ENCODE measurements at regions of chr1 and their contacts with region 1.

Region 1: DNA sequence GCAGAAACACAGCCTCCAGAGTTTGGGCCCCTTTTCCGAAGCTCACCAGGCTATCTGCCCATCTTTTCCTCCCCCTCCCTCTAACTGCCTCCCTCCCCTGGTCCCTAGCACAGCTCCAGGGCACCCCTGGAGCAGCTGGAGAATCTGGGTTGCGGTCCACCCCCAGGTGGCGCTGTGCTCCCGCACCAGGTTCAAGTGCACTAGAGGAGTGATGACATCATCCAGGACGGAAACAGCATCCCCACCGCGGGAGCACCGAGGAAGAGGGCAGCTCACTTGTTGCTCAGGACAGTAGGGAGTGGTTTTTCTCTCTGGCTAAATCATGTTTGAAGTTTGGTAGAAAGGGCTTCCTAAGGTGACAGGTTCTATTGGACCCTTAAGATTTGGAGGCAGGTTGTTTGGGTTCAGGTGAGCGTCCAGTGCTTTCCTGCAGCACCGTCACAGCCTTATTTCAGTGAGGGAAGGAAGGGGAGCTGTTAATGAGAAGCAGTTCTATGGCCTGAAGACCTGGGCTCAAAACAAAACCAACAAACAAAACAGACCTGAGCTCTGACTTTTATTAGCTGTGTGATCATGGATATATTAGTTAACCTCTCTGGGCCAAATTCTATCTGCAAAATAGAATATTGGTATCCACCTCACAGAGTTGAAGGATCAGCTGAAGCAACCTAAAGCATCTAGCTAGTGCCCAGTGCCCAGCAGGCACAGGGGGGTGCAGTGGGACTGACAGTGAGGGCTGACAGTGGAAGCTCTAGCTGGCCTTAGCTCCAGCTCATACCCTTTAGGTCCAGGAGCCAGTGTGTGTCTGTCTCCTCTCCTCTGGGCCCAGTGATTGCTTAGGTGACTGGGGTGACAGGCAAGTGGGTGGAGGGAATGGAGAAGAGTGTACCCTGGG is 7.5 kb downstream of the SHISA4 start:
- DNase-seq: peak; percentile 92
- ATAC-seq: peak; percentile 94
- H3K4me3 Mint-ChIP-seq: peak overlapping the region; percentile 48
- H3K27ac Mint-ChIP-seq: peak overlapping the region; percentile 82
- H3K4me1 Mint-ChIP-seq: peaks cover 30% of the 10 kb centered on the region
- H3K27me3 Mint-ChIP-seq: peaks cover 13% of the 10 kb centered on the region

Region 2: DNA sequence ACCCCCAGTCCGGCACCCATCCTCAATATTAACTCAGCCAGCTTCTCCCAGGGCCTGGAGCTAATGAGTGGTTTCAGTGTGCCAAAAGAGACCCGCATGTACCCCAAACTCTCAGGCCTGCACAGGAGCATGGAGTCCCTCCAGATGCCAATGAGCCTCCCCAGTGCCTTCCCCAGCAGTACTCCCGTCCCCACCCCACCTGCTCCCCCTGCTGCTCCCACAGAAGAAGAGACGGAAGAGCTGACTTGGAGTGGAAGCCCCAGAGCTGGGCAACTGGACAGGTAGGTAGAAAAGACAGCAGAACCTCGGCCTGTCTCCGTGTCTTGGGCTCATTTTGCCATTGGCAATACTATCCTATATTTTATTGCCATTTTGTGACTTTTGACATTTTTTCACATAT is 112.6 kb before region 1 on chr1:
- CTCF ChIA-PET with region 1: no interaction called
- POLR2A ChIA-PET with region 1: no interaction called
- DNase-seq: no peak
- ATAC-seq: no peak
- H3K4me3 Mint-ChIP-seq: no peak overlapping the region
- H3K27ac Mint-ChIP-seq: no peak overlapping the region
- H3K4me1 Mint-ChIP-seq: no peaks in the 10 kb centered on the region
- H3K27me3 Mint-ChIP-seq: peaks cover 3% of the 10 kb centered on the region

Region 3: DNA sequence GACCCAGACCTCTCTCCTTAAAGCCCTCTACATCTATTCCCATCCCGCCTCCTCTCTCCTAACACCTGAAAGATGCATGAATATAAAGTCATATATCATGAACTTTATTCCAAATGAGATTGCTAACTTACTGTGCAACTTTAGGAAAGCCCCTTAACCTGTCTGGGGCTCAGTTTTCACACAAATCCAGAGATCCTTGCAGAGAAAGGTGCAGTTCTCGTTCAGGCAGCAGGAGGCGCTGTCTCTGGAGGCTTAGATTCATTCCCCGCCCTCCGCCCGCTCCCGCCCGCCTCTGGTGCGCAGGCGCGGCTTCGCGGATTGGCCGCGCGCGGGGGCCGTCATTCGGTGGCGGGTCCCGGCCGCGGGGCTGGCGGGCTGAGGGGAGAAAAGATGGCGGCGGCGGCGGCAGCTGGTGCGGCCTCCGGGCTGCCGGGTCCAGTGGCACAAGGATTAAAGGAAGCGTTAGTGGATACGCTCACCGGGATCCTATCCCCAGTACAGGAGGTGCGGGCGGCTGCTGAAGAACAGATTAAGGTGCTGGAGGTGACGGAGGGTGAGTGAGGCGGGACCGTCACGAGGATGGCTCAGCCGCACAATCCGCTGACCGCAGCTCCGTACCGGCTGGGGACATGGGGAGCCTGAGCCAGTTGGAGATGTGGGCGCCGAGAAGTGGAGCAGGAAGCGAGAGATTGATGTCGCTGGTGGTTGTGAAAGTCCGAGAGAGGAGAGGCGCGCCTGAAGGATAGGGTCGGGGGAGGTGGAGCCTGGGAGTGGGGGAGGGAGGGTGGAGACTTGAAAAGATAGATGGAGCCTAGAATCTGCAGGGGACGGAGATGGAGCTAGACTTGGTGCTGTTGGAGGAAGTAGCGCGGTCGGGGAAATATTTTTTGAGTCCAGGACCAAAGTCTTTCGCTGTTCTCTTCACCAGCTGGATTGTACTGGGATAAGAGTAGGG is 67.1 kb before region 1 on chr1 and contains the start of gene IPO9:
- CTCF ChIA-PET with region 1: interaction called, 15 read pairs
- POLR2A ChIA-PET with region 1: no interaction called
- DNase-seq: peak; percentile 96
- ATAC-seq: peak; percentile 93
- H3K4me3 Mint-ChIP-seq: peak within 1 kb of the TSS; percentile 89
- H3K27ac Mint-ChIP-seq: peak within 1 kb of the TSS; percentile 96
- H3K4me1 Mint-ChIP-seq: peaks cover 38% of the 10 kb centered on the region
- H3K27me3 Mint-ChIP-seq: no peaks in the 10 kb centered on the region
- total RNA-seq, gene IPO9: 55.3 to 58.1 TPM

Region 4: GRCh38 chr1:201870397-201870796 is 25.8 kb before region 1 on chr1:
- CTCF ChIA-PET with region 1: interaction called, 20 read pairs
- POLR2A ChIA-PET with region 1: no interaction called
- DNase-seq: no peak
- ATAC-seq: no peak
- H3K4me3 Mint-ChIP-seq: no peak overlapping the region
- H3K27ac Mint-ChIP-seq: no peak overlapping the region
- H3K4me1 Mint-ChIP-seq: no peaks in the 10 kb centered on the region
- H3K27me3 Mint-ChIP-seq: no peaks in the 10 kb centered on the region

Region 5: DNA sequence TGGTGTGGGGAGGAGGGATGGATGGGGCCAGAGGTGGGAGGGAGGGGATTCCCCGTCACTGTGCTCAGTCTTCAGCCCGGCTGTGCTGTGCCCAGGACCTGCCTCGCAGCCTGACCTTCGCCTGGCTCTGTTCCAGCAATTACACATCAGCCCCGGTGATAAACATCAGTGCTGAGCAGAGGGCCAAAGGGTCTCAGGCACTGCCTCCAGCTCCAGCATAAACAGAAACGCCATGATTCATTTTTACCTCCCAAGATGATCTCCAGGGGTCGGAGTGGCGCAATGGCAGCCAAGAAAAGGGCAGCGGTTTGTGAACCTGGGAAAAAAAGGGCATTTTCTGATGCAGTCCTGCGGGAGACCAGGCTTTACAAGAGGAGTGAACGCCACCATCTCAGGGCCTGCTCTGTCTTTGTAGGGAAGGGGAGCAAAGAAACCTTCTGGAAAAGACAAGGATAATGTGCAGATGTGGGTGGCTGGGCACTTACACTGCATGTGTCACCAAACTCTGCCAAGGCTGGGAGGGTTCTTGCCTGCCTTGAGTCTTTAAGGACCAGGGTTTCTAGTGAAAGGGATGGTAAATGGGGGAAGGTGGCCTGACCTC is 20.6 kb after region 1 on chr1:
- CTCF ChIA-PET with region 1: interaction called, 13 read pairs
- POLR2A ChIA-PET with region 1: no interaction called
- DNase-seq: no peak
- ATAC-seq: no peak
- H3K4me3 Mint-ChIP-seq: no peak overlapping the region
- H3K27ac Mint-ChIP-seq: no peak overlapping the region
- H3K4me1 Mint-ChIP-seq: peaks cover 2% of the 10 kb centered on the region
- H3K27me3 Mint-ChIP-seq: peaks cover 20% of the 10 kb centered on the region

Region 6: DNA sequence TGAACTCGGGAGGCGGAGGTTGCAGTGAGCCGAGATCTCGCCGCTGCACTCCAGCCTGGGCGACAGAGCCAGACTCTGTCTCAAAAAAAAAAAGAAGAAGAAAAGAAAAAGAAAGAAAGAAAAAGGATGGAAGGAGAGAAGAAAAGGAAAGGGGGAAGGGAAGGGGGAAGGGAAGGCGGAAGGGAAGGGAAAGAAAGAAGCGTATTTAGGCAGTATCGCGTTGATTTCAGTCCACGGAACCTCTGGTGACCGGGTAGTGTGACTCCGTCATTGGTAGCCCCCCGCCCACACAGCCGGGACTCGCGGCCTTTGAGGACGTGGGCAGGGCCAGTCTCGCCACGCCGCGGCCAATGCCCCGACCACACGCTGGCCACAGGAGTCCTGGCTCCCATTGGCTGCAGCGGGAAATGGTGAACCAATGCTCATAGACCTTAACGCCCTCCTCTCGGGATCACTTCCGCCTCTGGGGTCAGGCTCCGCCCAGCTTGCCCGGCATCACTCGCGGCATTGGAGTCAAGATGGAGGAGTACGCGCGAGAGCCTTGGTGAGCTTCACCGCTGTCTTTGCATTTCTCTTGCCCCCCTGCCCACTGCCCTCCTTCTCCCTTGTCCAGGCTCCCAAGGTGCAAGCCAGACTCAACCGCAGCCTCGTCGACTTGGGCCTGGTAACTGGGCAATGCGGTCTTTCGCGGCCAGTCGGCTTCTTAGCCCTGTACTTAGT is 59.0 kb after region 1 on chr1 and contains the start of gene TIMM17A:
- CTCF ChIA-PET with region 1: interaction called, 36 read pairs
- POLR2A ChIA-PET with region 1: no interaction called
- DNase-seq: peak; percentile 97
- ATAC-seq: peak; percentile 100
- H3K4me3 Mint-ChIP-seq: peak within 1 kb of the TSS; percentile 91
- H3K27ac Mint-ChIP-seq: peak within 1 kb of the TSS; percentile 95
- H3K4me1 Mint-ChIP-seq: peaks cover 26% of the 10 kb centered on the region
- H3K27me3 Mint-ChIP-seq: peaks cover 3% of the 10 kb centered on the region
- total RNA-seq, gene TIMM17A: 51.4 to 54.0 TPM

Region 7: GRCh38 chr1:201982623-201983379 is 86.6 kb after region 1 on chr1 and contains the start of gene RNPEP:
- CTCF ChIA-PET with region 1: interaction called, 25 read pairs
- POLR2A ChIA-PET with region 1: no interaction called
- DNase-seq: peak; percentile 65
- ATAC-seq: peak; percentile 85
- H3K4me3 Mint-ChIP-seq: peak within 1 kb of the TSS; percentile 89
- H3K27ac Mint-ChIP-seq: peak within 1 kb of the TSS; percentile 84
- H3K4me1 Mint-ChIP-seq: peaks cover 19% of the 10 kb centered on the region
- H3K27me3 Mint-ChIP-seq: peaks cover 8% of the 10 kb centered on the region
- total RNA-seq, gene RNPEP: 32.0 to 32.2 TPM

Region 8: DNA sequence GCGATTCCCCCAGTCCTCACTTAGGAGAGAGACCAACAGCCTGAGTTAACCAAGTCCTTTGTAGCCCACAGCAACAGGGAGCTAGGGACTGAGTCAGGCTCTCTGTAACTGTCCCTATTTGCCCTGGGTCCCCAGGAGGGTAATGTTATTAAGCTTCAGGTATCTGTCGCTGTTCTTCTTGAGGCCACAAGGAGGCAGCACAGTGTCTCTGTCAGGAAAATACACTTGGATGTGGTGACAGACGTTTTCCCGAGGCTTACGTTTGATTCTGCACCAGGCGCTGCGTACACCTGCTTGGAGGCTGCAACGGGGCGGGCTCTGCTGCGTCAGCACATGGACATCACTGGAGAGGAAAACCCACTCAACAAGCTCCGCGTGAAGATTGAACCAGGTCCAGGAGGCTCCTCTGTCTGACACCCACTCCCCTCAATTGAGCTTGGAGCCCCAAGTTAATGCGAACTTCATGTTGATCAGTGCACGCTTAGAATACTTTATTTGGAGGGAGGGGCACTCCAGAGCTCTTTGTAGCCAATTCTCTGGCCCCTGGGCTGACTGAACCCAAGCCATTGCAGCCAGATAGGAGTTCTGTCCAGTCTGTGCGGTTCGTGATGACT is 103.6 kb after region 1 on chr1:
- CTCF ChIA-PET with region 1: interaction called, 19 read pairs
- POLR2A ChIA-PET with region 1: no interaction called
- DNase-seq: peak; percentile 45
- ATAC-seq: peak; percentile 82
- H3K4me3 Mint-ChIP-seq: no peak overlapping the region
- H3K27ac Mint-ChIP-seq: no peak overlapping the region
- H3K4me1 Mint-ChIP-seq: no peaks in the 10 kb centered on the region
- H3K27me3 Mint-ChIP-seq: no peaks in the 10 kb centered on the region

Measured in activated CD8-positive, alpha-beta T cell treated with anti-CD3 and anti-CD28 coated beads, Interleukin-2, amount 10 ng/mL, durations not matched to agents 7 days and 5 days (primary cell).